K562 (cell line): ENCODE measurements at regions of chr16 and their contacts with region 1.

Region 1: GRCh38 chr16:3150346-3151218 is 15.8 kb downstream of the ZNF213 start:
- DNase-seq: peak; percentile 97
- ATAC-seq: peak; percentile 88
- H3K4me3 ChIP-seq: peak overlapping the region; percentile 62
- H3K27ac ChIP-seq: peak overlapping the region; percentile 86
- H3K4me1 ChIP-seq: peaks cover 0 to 43% of the 10 kb centered on the region in 2 experiments; a peak in 3 of 5 replicates
- H3K27me3 ChIP-seq: no peaks in the 10 kb centered on the region
- CTCF ChIP-seq: peak in 1 of 3 experiments; percentile 5; a peak in 1 of 6 replicates
- EP300 ChIP-seq: peak; percentile 78
- POLR2A ChIP-seq: no peak
- RAD21 ChIP-seq: no peak

Region 2: DNA sequence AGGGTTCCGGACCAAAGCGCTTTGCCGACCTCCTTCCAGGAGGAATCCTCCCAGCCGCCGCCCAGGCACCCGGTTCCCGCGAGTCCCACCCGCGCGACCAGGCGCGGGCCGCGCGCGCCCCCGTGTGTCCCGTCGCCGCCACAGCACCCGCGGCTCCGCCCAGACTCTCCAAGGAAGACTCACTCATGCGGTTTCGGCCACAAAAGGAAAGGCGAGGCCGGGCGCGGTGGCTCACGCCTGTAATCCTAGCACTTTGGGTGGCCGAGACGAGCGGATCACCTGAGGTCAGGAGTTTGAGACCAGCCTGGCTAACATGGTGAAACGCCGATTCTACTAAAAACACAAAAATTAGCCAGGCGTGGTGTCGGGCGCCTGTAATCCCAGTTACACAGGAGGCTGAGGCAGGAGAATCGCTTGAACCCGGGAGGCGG is 166.9 kb before region 1 on chr16:
- CTCF ChIA-PET with region 1: no interaction called
- POLR2A ChIA-PET with region 1: no interaction called
- in situ Hi-C with region 1: no loop called
- intact Hi-C with region 1: no loop called
- DNase-seq: peak; percentile 88 to 94 (median 90)
- ATAC-seq: peak; percentile 63
- H3K4me3 ChIP-seq: no peak overlapping the region
- H3K27ac ChIP-seq: peak overlapping the region; percentile 57; the same call in 2 of the 3 replicates
- H3K4me1 ChIP-seq: peaks cover 19 to 84% of the 10 kb centered on the region in 2 experiments
- H3K27me3 ChIP-seq: no peaks in the 10 kb centered on the region
- CTCF ChIP-seq: peak; percentile 90 to 95 (median 90)
- EP300 ChIP-seq: no peak
- POLR2A ChIP-seq: peak; percentile 52
- RAD21 ChIP-seq: peak; percentile 90 to 91

Region 3: GRCh38 chr16:3129137-3130131 is 21.1 kb before region 1 on chr16:
- CTCF ChIA-PET with region 1: interaction called, 9 read pairs
- POLR2A ChIA-PET with region 1: interaction called, 32 read pairs
- in situ Hi-C with region 1: no loop called
- intact Hi-C with region 1: loop called (anchors 2 kb)
- DNase-seq: peak in 3 of 4 experiments; percentile 37 to 91 (median 49)
- ATAC-seq: peak; percentile 77
- H3K4me3 ChIP-seq: peak overlapping the region; percentile 40
- H3K27ac ChIP-seq: peak overlapping the region; percentile 40
- H3K4me1 ChIP-seq: peaks cover 15 to 24% of the 10 kb centered on the region in 2 experiments; a peak in 4 of 5 replicates
- H3K27me3 ChIP-seq: no peaks in the 10 kb centered on the region
- CTCF ChIP-seq: peak; percentile 93 to 95 (median 93)
- EP300 ChIP-seq: no peak
- POLR2A ChIP-seq: peak; percentile 62; the same call in 1 of the 2 replicates
- RAD21 ChIP-seq: peak; percentile 72 to 79

Region 4: GRCh38 chr16:3134564-3135417 is 15.8 kb before region 1 on chr16 and contains the start of gene ZNF213:
- CTCF ChIA-PET with region 1: interaction called, 9 read pairs
- POLR2A ChIA-PET with region 1: interaction called, 32 read pairs
- in situ Hi-C with region 1: no loop called
- intact Hi-C with region 1: loop called (anchors 2 kb)
- DNase-seq: peak; percentile 85 to 98 (median 88)
- ATAC-seq: peak; percentile 95
- H3K4me3 ChIP-seq: peak within 1 kb of the TSS; percentile 93
- H3K27ac ChIP-seq: peak within 1 kb of the TSS; percentile 87
- H3K4me1 ChIP-seq: peaks cover 5 to 29% of the 10 kb centered on the region in 2 experiments; a peak in 4 of 5 replicates
- H3K27me3 ChIP-seq: no peaks in the 10 kb centered on the region
- CTCF ChIP-seq: no peak
- EP300 ChIP-seq: no peak
- POLR2A ChIP-seq: peak; percentile 90
- RAD21 ChIP-seq: no peak
- polyA plus RNA-seq, gene ZNF213: 0.49 to 0.62 TPM

Region 5: DNA sequence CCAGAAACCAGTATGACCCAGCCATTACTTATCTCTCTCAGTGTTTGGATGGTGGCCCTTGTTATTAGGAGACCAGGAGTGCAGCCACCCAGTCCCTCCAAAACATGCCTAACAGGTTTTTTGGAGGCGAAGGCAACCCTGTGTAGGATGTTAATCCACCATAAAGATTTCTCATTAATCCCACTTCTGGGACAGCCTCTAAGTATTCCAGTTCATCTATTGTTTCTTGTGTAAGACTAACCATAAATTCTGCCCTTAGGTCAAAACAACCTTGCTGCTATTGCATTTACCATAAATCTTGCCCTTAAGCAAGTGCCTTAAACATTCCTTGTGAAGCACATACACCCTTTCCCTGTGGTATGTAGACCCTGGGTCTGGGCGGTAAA is 15.9 kb after region 1 on chr16:
- CTCF ChIA-PET with region 1: no interaction called
- POLR2A ChIA-PET with region 1: interaction called, 6 read pairs
- in situ Hi-C with region 1: no loop called
- intact Hi-C with region 1: loop called (anchors 2 kb)
- DNase-seq: no peak
- ATAC-seq: no peak
- H3K4me3 ChIP-seq: no peak overlapping the region
- H3K27ac ChIP-seq: no peak overlapping the region
- H3K4me1 ChIP-seq: peaks cover 18 to 41% of the 10 kb centered on the region in 2 experiments; a peak in 4 of 5 replicates
- H3K27me3 ChIP-seq: peaks cover 0 to 4% of the 10 kb centered on the region in 2 experiments; a peak in 1 of 5 replicates
- CTCF ChIP-seq: no peak
- EP300 ChIP-seq: no peak
- POLR2A ChIP-seq: no peak
- RAD21 ChIP-seq: no peak

Region 6: GRCh38 chr16:3188925-3189825 is 38.6 kb after region 1 on chr16:
- CTCF ChIA-PET with region 1: no interaction called
- POLR2A ChIA-PET with region 1: interaction called, 3 read pairs
- in situ Hi-C with region 1: no loop called
- intact Hi-C with region 1: loop called (anchors 1 kb)
- DNase-seq: peak; percentile 74 to 85 (median 77)
- ATAC-seq: peak; percentile 67
- H3K4me3 ChIP-seq: peak overlapping the region; percentile 55
- H3K27ac ChIP-seq: peak overlapping the region; percentile 70; the same call in 2 of the 3 replicates
- H3K4me1 ChIP-seq: peaks cover 23 to 55% of the 10 kb centered on the region in 2 experiments
- H3K27me3 ChIP-seq: no peaks in the 10 kb centered on the region
- CTCF ChIP-seq: no peak
- EP300 ChIP-seq: no peak; the same call in 1 of the 2 replicates
- POLR2A ChIP-seq: peak; percentile 54
- RAD21 ChIP-seq: no peak

Region 7: DNA sequence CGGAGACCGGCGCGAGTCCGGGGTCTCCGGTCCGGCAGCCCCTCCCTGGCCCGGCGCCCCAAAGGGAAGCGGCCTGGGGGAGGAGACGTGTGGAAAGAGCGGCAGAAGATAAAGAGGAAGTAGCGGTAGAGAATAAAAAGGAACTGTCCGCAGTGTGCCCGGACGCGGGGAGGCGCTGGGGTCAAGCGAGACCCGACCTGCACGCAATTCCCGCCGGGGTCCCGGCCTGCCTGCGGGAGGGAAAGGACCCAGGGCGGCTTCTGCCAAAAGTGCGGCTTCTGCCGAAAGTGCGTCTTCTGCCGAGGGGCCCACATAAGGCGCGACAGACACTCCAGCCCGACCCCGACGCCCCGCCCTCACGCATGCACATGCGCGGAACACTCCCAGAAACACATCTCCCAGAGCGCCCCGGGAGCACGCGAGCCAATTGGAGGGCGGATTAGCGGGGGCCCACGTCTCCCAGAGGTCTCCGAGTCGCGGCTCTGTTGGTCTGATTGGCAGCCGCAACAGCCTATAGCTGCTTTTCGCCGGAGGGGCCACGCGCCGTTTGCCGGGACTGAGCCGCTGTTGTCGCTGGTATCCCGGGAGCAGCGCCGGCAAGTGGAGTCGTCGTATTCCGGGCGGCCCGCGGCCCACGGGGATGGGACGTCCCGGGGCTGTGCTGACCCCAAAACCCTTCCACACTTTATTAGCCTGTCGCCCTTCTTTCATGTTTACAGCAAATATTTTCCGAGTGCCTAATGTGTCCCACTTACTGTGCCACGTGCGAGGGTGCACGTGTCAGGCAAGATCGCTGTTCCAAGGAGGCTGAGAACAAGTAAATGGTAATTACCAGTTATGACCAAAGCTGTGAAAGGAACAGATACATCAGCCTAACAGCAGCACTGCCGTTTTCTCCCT is 113.8 kb after region 1 on chr16:
- CTCF ChIA-PET with region 1: no interaction called
- POLR2A ChIA-PET with region 1: interaction called, 3 read pairs
- in situ Hi-C with region 1: no loop called
- intact Hi-C with region 1: loop called (anchors 10 kb)
- DNase-seq: peak; percentile 97 to 98 (median 97)
- ATAC-seq: peak; percentile 97
- H3K4me3 ChIP-seq: peak overlapping the region; percentile 65
- H3K27ac ChIP-seq: peak overlapping the region; percentile 75
- H3K4me1 ChIP-seq: peaks cover 4 to 21% of the 10 kb centered on the region in 2 experiments; a peak in 4 of 5 replicates
- H3K27me3 ChIP-seq: peaks cover under 1 to 2% of the 10 kb centered on the region in 2 experiments; a peak in 2 of 5 replicates
- CTCF ChIP-seq: peak; percentile 65 to 67 (median 67)
- EP300 ChIP-seq: no peak; the same call in 1 of the 2 replicates
- POLR2A ChIP-seq: peak; percentile 84
- RAD21 ChIP-seq: peak; percentile 54 to 72

Region 8: DNA sequence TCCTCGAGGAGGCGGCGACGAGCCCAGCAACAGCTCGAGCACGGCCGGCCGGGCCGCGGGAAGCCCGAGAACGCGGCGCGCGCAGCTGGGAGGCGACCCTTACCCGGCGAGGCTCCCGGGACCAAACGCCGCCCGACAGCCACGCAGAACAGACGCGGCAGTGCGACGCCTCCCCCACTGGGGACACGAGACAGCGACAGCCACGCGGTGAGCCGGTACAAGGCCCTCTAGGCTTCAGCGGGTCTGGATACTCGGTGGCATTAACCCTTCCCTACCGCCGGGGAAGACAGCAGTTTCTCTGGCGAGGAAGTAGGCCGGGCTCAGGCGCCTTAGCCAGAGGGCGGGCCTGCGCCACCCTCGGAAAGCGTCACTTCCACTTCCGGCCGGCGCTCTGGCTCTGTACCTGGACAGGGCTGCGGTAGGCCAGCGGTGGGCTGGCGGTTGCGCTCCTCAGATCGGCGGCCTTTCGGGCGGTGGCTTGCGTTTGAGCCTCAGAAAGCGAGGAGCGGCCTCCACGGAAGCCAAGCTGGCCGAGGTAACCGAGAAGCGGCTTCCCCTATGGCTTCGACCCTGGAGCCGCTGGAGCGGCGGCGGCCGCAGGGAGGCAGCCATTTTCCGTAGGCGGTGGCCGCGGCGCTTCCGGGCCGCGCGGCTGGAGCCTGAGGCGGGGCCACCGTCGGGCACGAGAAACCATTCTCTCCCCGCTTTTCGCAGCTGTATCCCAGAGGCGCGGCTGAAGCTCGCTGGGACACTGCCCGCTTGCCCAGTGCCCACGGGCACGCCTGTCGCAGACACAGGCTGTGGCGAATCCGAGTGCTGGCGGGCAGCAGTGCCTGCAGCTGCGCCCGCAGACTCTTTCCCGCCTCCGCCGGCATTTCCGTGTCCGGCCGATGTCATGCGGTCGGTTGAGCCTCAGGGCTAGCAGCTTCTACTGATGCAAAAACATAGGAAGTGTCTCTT is 154.8 kb after region 1 on chr16 and contains the starts of genes TIGD7 and ZNF75A:
- CTCF ChIA-PET with region 1: no interaction called
- POLR2A ChIA-PET with region 1: no interaction called
- in situ Hi-C with region 1: no loop called
- intact Hi-C with region 1: no loop called
- DNase-seq: peak; percentile 81 to 91 (median 84)
- ATAC-seq: peak; percentile 99
- H3K4me3 ChIP-seq: peak within 1 kb of the TSS; percentile 73
- H3K27ac ChIP-seq: peak within 1 kb of the TSS; percentile 94
- H3K4me1 ChIP-seq: peaks cover 0 to 16% of the 10 kb centered on the region in 2 experiments; a peak in 4 of 5 replicates
- H3K27me3 ChIP-seq: no peaks in the 10 kb centered on the region
- CTCF ChIP-seq: peak in 1 of 3 experiments; percentile 16; a peak in 1 of 6 replicates
- EP300 ChIP-seq: no peak
- POLR2A ChIP-seq: peak; percentile 95
- RAD21 ChIP-seq: no peak; a peak in 1 of 4 replicates
- polyA plus RNA-seq, gene TIGD7: 0.84 to 2.0 TPM
- polyA plus RNA-seq, gene ZNF75A: 7.2 to 10.1 TPM